ENCODE measurements at regions of chrX and their contacts with region 1.

Region 1: GRCh38 chrX:132957211-132958090 is 978 bp downstream of the HS6ST2 start:
- DNase-seq: no peak
- CTCF ChIP-seq: no peak

Region 2: DNA sequence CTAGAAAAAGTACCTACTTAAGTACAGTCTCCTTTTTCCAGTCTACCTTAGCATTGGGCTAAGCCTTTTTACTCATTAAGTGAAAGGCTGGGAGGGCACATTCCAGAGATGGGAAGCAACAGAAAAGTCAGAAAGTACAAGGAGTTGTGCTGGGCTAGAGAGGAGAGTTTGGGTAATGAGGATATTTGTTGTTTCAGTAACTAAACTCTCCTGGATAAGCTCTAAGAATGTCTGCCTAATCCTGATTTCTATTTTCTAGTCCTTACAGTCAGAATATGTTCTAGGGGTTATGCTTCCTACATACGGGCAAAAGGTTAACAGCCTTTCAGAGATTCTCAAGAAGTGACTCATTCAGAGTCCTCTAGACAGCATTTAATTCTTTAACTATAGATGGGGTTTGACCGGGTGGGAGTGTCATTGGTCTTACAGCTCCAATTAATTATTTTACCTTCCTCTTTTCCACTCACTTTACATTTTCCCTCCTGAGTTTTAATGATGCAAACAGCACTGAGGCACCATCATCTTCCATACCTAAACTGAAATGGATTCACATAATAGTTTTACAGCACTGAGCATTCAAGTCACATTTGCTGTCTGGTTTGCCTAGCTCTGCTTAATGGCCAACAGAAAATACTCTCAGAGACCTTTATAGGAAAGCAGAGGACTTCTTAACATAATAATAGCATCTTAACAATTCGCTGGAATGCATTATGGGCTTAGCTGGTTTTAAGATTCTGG is 96.6 kb after region 1 on chrX:
- in situ Hi-C with region 1: loop called (anchors 25 kb)
- DNase-seq: no peak
- CTCF ChIP-seq: no peak

Region 3: GRCh38 chrX:133215747-133216146 is 258.3 kb after region 1 on chrX:
- in situ Hi-C with region 1: no loop called
- DNase-seq: no peak
- CTCF ChIP-seq: no peak

Measured in GM13976 (cell line).